Activated B cell treated with CpG ODN at 0.5 μM for 24 hours (primary cell): ENCODE measurements at regions of chr2 and their contacts with region 1.

Region 1: GRCh38 chr2:33475224-33476130 is 972 bp upstream of the RASGRP3 start:
- DNase-seq: no peak
- ATAC-seq: peak; percentile 60
- H3K4me3 Mint-ChIP-seq: peak overlapping the region; percentile 97
- H3K27ac Mint-ChIP-seq: peak overlapping the region; percentile 98
- H3K4me1 Mint-ChIP-seq: peaks cover 46% of the 10 kb centered on the region
- H3K27me3 Mint-ChIP-seq: no peaks in the 10 kb centered on the region
- CTCF ChIP-seq: peak; percentile 47

Region 2: DNA sequence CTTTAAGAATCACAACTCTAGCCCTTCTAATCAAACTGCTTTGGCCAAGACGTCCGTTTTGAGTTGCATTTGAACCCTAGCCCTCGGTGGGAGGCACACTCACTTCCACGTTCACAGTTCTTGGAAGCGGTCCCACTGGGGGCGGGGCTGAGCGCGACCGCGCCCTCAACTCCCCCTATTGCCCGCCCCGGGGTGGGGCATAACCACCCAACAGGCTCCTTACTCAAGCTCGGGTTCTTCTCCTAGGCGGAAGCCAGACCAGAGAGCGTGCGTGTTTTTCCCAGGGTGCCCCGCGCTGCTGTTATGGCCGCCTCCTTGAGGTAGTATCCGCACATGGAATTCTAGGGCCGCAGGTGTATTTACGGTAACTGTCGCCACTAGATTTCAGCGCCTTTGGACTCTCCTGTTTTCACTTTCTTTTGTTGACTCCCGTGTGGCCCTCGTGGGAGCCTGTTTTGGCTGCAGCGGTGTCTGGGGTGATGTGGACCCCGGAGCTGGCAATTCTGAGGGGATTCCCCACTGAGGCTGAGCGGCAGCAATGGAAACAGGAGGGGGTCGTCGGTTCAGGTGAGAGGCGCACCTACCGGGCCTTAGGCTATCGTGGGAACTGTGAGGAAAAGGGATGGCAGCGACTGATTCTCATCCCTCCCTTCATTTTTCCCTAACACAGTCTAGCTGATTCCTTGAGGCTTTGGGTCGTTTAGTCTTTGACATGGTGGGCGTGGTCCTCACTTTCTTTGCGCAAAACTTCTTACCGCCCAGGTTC is 847.5 kb before region 1 on chr2 and contains the start of gene TTC27:
- CTCF ChIA-PET with region 1: no interaction called
- POLR2A ChIA-PET with region 1: no interaction called
- intact Hi-C with region 1: loop called (anchors 1 kb)
- DNase-seq: peak; percentile 93
- ATAC-seq: peak; percentile 100
- H3K4me3 Mint-ChIP-seq: peak within 1 kb of the TSS; percentile 97
- H3K27ac Mint-ChIP-seq: peak within 1 kb of the TSS; percentile 93
- H3K4me1 Mint-ChIP-seq: peaks cover 27% of the 10 kb centered on the region
- H3K27me3 Mint-ChIP-seq: no peaks in the 10 kb centered on the region
- CTCF ChIP-seq: no peak
- total RNA-seq, gene TTC27: 34.8 and 36.3 TPM in 2 replicates

Region 3: GRCh38 chr2:33210626-33211025 is 264.9 kb before region 1 on chr2:
- CTCF ChIA-PET with region 1: no interaction called
- POLR2A ChIA-PET with region 1: no interaction called
- intact Hi-C with region 1: no loop called
- DNase-seq: no peak
- ATAC-seq: no peak
- H3K4me3 Mint-ChIP-seq: no peak overlapping the region
- H3K27ac Mint-ChIP-seq: no peak overlapping the region
- H3K4me1 Mint-ChIP-seq: peaks cover 8% of the 10 kb centered on the region
- H3K27me3 Mint-ChIP-seq: peaks cover 6% of the 10 kb centered on the region
- CTCF ChIP-seq: no peak

Region 4: DNA sequence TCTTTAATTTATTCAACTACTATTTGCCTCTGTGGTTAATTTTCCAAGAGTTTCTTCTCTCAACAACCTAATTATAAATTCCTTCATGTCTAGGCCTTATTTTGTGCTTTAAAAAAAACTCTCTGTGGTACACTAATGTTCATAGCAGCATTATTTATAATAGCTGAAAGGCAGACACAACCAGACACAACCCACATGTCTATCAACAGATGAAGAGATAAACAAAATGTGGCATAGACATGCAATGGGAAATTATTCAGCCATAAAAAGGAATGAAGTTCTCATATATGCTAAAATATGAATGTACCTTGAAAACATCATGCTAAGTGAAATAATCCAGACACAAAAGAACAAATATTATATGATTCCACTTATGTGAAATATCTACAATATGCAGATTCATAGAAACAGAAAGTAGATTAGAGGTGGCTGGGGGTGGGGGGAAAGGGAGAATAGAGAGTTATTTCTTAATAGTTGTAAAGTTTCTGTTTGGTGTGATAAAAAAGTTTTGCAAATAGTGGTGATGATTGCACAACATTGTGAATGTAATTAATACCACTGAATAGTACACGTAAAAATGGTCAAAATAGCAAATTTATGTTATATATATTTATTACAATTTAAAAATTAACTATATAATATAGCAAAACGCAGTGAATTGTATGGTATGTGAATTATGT is 27.1 kb before region 1 on chr2:
- CTCF ChIA-PET with region 1: no interaction called
- POLR2A ChIA-PET with region 1: no interaction called
- intact Hi-C with region 1: no loop called
- DNase-seq: no peak
- ATAC-seq: no peak
- H3K4me3 Mint-ChIP-seq: no peak overlapping the region
- H3K27ac Mint-ChIP-seq: no peak overlapping the region
- H3K4me1 Mint-ChIP-seq: peaks cover 6% of the 10 kb centered on the region
- H3K27me3 Mint-ChIP-seq: no peaks in the 10 kb centered on the region
- CTCF ChIP-seq: no peak

Region 5: DNA sequence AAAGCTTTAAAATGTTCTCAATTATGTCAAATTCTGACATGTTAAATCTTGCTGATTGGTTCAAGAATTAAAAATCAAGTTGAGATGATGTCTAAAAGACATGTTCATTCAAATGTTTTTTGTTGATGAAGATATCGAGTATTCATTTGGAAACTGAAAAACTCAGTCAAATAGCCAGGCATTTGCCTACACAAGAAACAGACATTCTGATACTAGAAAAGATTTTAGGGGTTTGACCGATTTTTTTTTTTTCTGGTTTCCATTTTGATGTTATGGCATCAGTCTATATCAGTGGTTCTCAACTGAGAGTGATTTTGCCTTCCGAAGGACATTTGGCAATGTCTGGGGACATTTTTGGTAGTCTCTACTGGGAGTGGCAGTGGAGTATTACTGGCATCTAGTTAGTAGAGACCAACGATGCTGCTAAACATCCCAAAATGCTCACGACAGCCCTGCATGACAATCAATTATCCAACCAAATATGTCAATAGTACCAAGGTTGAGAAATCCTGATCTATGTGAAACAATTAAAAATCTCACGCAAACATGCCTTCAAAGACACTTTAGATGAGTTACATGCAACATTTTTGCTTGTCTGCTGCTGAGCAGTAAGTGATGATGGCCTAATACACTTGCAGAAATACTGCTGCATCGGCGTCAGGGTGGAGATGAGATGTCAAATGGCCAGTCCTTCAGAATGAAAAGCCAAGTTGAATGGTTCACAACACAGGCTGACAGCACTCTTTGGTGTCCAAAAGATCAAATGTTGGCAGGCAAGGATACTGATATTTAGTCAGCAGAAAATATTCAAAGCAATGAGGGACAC is 13.5 kb after region 1 on chr2:
- CTCF ChIA-PET with region 1: interaction called, 17 read pairs
- POLR2A ChIA-PET with region 1: interaction called, 421 read pairs
- intact Hi-C with region 1: loop called (anchors 1 kb)
- DNase-seq: no peak
- ATAC-seq: peak; percentile 19
- H3K4me3 Mint-ChIP-seq: peak overlapping the region; percentile 51
- H3K27ac Mint-ChIP-seq: peak overlapping the region; percentile 87
- H3K4me1 Mint-ChIP-seq: peaks cover 96% of the 10 kb centered on the region
- H3K27me3 Mint-ChIP-seq: no peaks in the 10 kb centered on the region
- CTCF ChIP-seq: no peak

Region 6: DNA sequence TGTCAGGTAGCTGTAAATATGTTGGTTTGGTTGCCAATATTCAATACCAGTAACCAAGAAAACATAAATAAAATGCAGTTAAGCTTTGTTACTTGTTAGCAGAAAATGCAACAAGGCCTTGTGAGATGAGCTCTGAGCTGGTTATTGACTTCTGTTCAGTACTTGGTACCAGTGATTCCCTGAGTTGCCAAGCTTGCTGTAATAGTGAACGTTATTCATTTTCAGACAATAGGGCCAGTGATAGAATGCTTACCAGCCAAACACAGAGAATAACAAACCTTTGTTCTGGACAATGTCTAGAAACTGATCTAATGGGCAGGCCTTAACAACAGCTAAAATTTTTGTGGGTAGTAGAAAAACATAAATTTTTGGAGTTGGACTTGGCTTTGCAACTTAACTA is 30.5 kb after region 1 on chr2:
- CTCF ChIA-PET with region 1: interaction called, 5 read pairs
- POLR2A ChIA-PET with region 1: interaction called, 421 read pairs
- intact Hi-C with region 1: loop called (anchors 5 kb)
- DNase-seq: no peak
- ATAC-seq: no peak
- H3K4me3 Mint-ChIP-seq: no peak overlapping the region
- H3K27ac Mint-ChIP-seq: no peak overlapping the region
- H3K4me1 Mint-ChIP-seq: peaks cover 84% of the 10 kb centered on the region
- H3K27me3 Mint-ChIP-seq: no peaks in the 10 kb centered on the region
- CTCF ChIP-seq: no peak

Region 7: DNA sequence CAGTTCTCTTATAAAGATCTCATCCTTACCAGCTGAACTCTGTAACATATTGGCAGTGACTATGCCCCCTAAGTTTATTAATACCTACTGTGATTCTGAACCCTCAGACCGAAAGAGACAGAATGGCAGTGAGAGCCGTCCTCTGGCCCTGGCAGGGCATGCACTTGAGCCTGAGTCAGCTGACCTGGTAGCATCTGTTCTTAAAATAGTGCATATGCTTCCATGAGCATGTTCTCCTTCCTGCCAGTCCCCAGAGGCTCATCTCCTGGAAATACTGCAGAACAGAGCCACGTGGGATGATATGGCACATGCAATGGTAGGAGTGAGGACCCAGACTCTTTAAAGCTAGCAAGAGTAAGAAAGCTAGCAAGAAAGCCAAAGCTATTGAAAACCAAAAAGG is 59.9 kb after region 1 on chr2:
- CTCF ChIA-PET with region 1: interaction called, 24 read pairs
- POLR2A ChIA-PET with region 1: interaction called, 92 read pairs
- intact Hi-C with region 1: loop called (anchors 1 kb)
- DNase-seq: no peak
- ATAC-seq: no peak
- H3K4me3 Mint-ChIP-seq: no peak overlapping the region
- H3K27ac Mint-ChIP-seq: no peak overlapping the region
- H3K4me1 Mint-ChIP-seq: peaks cover 46% of the 10 kb centered on the region
- H3K27me3 Mint-ChIP-seq: no peaks in the 10 kb centered on the region
- CTCF ChIP-seq: no peak

Region 8: GRCh38 chr2:33599175-33599942 is 123.9 kb after region 1 on chr2 and contains the start of gene FAM98A:
- CTCF ChIA-PET with region 1: interaction called, 6 read pairs
- POLR2A ChIA-PET with region 1: interaction called, 11 read pairs
- intact Hi-C with region 1: loop called (anchors 1 kb)
- DNase-seq: peak; percentile 97
- ATAC-seq: peak; percentile 94
- H3K4me3 Mint-ChIP-seq: peak within 1 kb of the TSS; percentile 99
- H3K27ac Mint-ChIP-seq: peak within 1 kb of the TSS; percentile 96
- H3K4me1 Mint-ChIP-seq: peaks cover 34% of the 10 kb centered on the region
- H3K27me3 Mint-ChIP-seq: no peaks in the 10 kb centered on the region
- CTCF ChIP-seq: no peak
- total RNA-seq, gene FAM98A: 30.2 and 40.5 TPM in 2 replicates

Region 9: GRCh38 chr2:34831096-34831495 is 1355.6 kb after region 1 on chr2:
- CTCF ChIA-PET with region 1: no interaction called
- POLR2A ChIA-PET with region 1: no interaction called
- intact Hi-C with region 1: no loop called
- DNase-seq: no peak
- ATAC-seq: no peak
- H3K4me3 Mint-ChIP-seq: no peak overlapping the region
- H3K27ac Mint-ChIP-seq: no peak overlapping the region
- H3K4me1 Mint-ChIP-seq: no peaks in the 10 kb centered on the region
- H3K27me3 Mint-ChIP-seq: no peaks in the 10 kb centered on the region
- CTCF ChIP-seq: no peak